ENCODE measurements at regions of chr9 and their contacts with region 1.

Region 1: GRCh38 chr9:115013998-115014397 is 83.6 kb upstream of the TNFSF8 start:
- H3K4me3 Mint-ChIP-seq: no peak overlapping the region
- H3K27ac Mint-ChIP-seq: no peak overlapping the region
- H3K4me1 Mint-ChIP-seq: peaks cover 66% of the 10 kb centered on the region
- H3K27me3 Mint-ChIP-seq: peaks cover 23% of the 10 kb centered on the region

Region 2: DNA sequence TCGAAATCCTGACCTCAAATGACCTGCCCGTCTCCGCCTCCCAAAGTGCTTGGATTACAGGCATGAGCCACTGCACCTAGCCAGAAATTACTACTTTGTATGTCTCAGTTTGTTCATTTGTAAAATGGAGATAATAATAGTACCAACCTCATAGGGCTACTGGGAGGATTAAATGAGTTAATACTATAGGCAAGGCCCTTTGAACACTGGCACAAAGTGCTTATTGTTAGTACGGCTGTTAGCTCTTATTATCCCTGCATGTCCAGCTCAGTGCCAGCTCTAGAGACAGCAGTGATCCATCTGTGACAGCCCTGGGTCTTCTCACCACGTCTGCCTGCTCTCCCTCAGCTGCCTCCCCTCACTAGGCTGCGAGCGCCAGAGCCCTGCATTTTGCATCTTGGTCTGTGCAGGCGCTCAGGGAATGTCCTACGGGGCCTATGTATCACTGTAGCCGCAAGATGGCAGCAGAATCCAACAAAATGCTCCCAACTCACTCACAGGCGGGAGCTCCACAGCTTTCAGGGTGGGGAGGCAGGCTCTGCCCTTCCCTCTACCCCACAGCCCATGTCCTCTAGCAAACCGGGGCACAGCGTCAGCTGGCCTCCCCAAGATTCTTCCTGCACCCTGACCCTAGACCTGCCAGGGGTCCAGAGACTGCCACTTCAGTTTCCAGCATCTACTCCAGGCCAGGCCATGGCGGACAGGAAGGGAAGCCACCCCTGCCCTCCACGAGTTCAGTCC is 608.5 kb before region 1 on chr9:
- intact Hi-C with region 1: loop called (anchors 10 kb)
- H3K4me3 Mint-ChIP-seq: no peak overlapping the region
- H3K27ac Mint-ChIP-seq: no peak overlapping the region
- H3K4me1 Mint-ChIP-seq: peaks cover 19% of the 10 kb centered on the region
- H3K27me3 Mint-ChIP-seq: no peaks in the 10 kb centered on the region

Region 3: DNA sequence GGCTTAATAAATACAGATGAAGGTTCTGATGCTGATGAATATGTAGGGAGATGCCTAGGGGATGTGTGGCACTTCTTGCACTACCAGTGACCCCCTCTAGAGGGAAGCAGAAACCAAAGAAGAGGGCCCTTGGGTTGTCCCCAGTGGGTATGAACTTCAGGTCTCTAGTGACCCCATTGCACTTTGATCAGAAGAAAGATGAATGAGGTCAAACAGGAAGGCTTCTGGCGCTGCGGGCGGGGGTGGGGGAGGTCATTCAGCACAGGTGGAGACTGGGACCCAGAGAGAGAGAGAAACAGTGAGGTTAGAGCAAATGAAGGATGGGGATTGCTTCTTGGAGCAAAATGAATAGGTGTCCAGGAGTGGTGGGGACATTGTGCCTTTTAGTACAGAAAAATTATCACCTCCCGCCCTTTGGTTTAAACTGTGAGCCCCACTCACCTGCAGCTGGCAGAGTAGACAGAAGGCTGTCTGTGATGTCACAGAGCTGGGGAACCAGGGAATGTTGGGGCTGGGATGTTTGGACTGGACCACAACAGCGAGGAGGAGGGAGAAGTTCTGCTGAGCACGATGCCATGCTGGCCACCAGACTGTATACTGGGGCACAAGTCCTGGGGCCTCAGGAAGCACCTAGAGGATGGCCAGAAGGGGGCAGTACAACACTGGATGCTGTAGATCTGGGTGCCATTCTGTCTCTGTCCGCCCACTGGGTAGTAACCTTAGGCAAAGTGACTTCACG is 332.2 kb before region 1 on chr9 and contains the start of gene TEX48:
- intact Hi-C with region 1: loop called (anchors 1 kb)
- H3K4me3 Mint-ChIP-seq: no peak within 1 kb of the TSS
- H3K27ac Mint-ChIP-seq: no peak within 1 kb of the TSS
- H3K4me1 Mint-ChIP-seq: peaks cover 26% of the 10 kb centered on the region
- H3K27me3 Mint-ChIP-seq: peaks cover 2% of the 10 kb centered on the region

Region 4: GRCh38 chr9:114738581-114739316 is 275.2 kb before region 1 on chr9:
- intact Hi-C with region 1: loop called (anchors 1 kb)
- H3K4me3 Mint-ChIP-seq: no peak overlapping the region
- H3K27ac Mint-ChIP-seq: peak overlapping the region; percentile 30
- H3K4me1 Mint-ChIP-seq: peaks cover 5% of the 10 kb centered on the region
- H3K27me3 Mint-ChIP-seq: peaks cover 14% of the 10 kb centered on the region

Region 5: DNA sequence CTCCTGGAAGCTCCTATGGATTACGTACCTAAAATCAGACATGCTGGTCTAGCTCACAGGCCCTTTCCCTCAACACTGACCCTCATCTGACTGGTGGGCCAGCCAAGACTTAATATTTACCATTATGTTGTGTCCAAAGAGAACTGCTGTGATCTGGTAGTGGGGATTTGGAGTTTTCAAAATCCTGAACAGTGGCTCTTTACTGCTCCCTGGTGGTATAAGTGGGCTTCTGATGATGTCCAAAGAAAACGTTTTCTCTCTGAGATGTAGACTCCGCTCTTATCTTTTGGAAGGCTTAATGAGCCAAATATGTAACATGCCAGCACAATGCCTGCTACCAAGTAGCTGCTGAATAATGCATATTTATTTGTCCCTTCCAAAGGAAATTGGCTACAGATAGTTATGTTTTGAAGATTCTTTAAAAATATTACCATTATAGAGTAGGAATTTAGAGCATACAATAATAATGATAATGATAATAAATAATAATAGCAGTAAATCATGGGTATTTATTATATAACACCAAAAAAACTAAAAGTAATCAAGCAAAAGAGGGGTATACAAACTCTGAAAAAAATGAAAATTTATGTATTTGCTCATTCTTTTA is 510.6 kb after region 1 on chr9:
- intact Hi-C with region 1: loop called (anchors 5 kb)
- H3K4me3 Mint-ChIP-seq: no peak overlapping the region
- H3K27ac Mint-ChIP-seq: no peak overlapping the region
- H3K4me1 Mint-ChIP-seq: no peaks in the 10 kb centered on the region
- H3K27me3 Mint-ChIP-seq: no peaks in the 10 kb centered on the region